Naive thymus-derived CD8-positive, alpha-beta T cell (primary cell): ENCODE measurements at regions of chr22 and their contacts with region 1.

Region 1: GRCh38 chr22:17785185-17786184 is 11.2 kb upstream of the BID start:
- DNase-seq: peak; percentile 50 to 82 (median 65)
- ATAC-seq: peak; percentile 44 to 53
- H3K4me3 Mint-ChIP-seq: no peak overlapping the region
- H3K27ac Mint-ChIP-seq: peak overlapping the region in 4 of 10 donors; percentile 31 to 66 (median 47)
- H3K4me1 Mint-ChIP-seq: peaks cover 10 to 31% (median 25%) of the 10 kb centered on the region in 4 donors
- H3K27me3 Mint-ChIP-seq: no peaks in the 10 kb centered on the region

Region 2: GRCh38 chr22:17706018-17706900 is 79.2 kb before region 1 on chr22:
- POLR2A ChIA-PET with region 1: no interaction called
- DNase-seq: peak in 2 of 10 donors; percentile 2 to 6
- ATAC-seq: peak; percentile 62 to 73
- H3K4me3 Mint-ChIP-seq: peak overlapping the region; percentile 4 to 85 (median 70)
- H3K27ac Mint-ChIP-seq: peak overlapping the region; percentile 49 to 94 (median 81)
- H3K4me1 Mint-ChIP-seq: peaks cover 6 to 18% (median 16%) of the 10 kb centered on the region in 4 donors
- H3K27me3 Mint-ChIP-seq: no peaks in the 10 kb centered on the region

Region 3: DNA sequence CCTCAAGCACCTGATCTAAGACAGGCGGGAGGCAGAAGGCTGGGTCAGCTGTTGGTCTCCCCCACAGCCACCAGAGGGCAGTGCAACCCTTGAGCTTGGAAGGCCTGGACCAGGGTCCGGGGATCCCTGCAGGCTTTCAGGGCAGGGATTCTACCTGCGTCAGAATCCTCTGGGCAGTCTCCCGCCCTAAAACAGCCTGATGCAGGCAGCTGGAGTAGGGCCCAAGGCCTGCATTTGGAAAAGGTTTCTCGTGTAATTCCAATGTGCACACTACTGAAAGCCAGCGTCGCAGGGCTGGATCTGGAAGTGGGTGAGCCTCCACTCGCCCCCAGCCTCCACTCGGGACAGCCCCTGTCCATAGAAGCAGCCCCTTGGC is 43.0 kb before region 1 on chr22:
- POLR2A ChIA-PET with region 1: interaction called, 10 read pairs
- DNase-seq: peak; percentile 48 to 73 (median 59)
- ATAC-seq: peak; percentile 76 to 88
- H3K4me3 Mint-ChIP-seq: no peak overlapping the region
- H3K27ac Mint-ChIP-seq: peak overlapping the region in 5 of 10 donors; percentile 24 to 71 (median 70)
- H3K4me1 Mint-ChIP-seq: peaks cover 3 to 16% (median 7%) of the 10 kb centered on the region in 4 donors
- H3K27me3 Mint-ChIP-seq: no peaks in the 10 kb centered on the region

Region 4: GRCh38 chr22:17797721-17798559 is 12.5 kb after region 1 on chr22:
- POLR2A ChIA-PET with region 1: no interaction called
- DNase-seq: no peak
- ATAC-seq: peak in 1 of 2 donors; percentile 37
- H3K4me3 Mint-ChIP-seq: no peak overlapping the region
- H3K27ac Mint-ChIP-seq: peak overlapping the region in 1 of 10 donors; percentile 38
- H3K4me1 Mint-ChIP-seq: peaks cover 0 to 37% (median 5%) of the 10 kb centered on the region in 4 donors
- H3K27me3 Mint-ChIP-seq: no peaks in the 10 kb centered on the region

Region 5: DNA sequence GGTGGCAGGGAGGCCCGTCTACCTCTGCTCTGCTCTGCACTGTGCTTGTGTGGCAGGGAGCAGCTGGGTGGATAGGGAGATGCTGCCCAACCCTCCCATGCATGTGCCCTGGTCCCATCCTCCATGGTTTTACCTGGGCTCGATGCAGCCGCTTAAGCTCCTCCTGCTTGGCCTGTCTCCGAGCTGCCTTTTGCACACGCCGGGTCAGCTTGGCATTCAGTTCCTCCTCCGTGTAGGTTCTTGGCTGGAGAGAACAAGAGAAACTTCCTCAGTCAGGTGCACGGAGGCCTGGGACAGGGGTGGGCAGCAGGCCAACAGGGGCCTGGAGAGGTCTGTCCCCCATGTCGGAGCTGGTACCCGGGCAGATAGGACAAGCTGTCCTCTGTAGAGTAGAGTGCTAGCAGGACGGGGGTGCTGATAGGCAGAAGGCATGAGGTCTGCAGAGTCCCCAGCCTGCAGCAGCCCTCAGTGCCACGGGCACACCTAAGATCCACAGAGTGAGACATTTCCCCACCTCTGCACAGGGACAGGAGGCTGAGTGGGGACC is 25.2 kb after region 1 on chr22:
- POLR2A ChIA-PET with region 1: no interaction called
- DNase-seq: no peak
- ATAC-seq: no peak
- H3K4me3 Mint-ChIP-seq: no peak overlapping the region
- H3K27ac Mint-ChIP-seq: peak overlapping the region in 1 of 10 donors; percentile 9
- H3K4me1 Mint-ChIP-seq: peaks cover 0 to 2% (median 0%) of the 10 kb centered on the region in 4 donors
- H3K27me3 Mint-ChIP-seq: no peaks in the 10 kb centered on the region

Region 6: GRCh38 chr22:17950651-17951214 is 165.2 kb after region 1 on chr22:
- POLR2A ChIA-PET with region 1: no interaction called
- DNase-seq: no peak
- ATAC-seq: no peak
- H3K4me3 Mint-ChIP-seq: no peak overlapping the region
- H3K27ac Mint-ChIP-seq: no peak overlapping the region
- H3K4me1 Mint-ChIP-seq: peaks cover 6 to 29% (median 20%) of the 10 kb centered on the region in 4 donors
- H3K27me3 Mint-ChIP-seq: no peaks in the 10 kb centered on the region